Posterior vena cava (tissue), 2 donors: ENCODE measurements at regions of chr14 and their contacts with region 1.

Region 1: DNA sequence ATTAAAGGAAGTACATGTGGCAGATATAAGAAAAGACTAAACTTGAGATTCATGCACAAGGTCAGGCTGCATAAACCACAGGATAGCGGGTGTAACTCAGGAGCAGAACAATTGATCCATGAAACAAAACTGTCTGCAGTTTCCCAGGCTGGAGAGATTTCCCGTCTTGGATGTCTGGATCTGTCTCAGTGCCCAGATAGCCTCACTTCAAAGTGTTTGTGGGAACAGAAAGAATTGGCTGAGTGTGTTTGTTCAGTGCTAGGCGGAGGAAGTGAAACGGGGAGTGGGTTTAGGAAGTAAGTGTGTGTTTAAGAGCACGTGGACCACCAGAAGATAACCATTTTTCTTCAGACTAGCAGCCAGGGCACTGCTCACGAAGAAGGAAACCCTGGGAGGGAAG is 1.4 kb upstream of the RNASE10 start:
- DNase-seq: no peak

Region 2: DNA sequence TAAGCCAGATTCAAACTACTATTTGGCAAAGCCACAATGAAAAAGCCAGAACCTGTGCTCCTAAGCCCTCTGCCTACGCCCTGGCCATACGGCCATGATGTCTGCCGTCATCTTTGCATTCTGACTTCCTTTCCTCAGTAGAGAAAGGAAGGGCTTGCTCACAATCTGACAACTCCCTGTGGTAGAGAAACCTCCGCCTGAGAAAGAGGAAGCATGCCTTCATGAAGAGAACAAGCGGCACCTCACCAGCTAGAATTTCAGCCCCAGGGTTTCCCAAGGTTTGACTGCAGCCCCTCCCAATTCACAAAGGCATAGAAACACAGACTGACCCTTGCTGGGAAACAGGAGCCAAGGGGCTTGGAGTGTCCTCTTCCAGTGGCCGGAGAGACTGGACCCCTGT is 116.3 kb before region 1 on chr14:
- intact Hi-C with region 1: no loop called
- DNase-seq: no peak

Region 3: DNA sequence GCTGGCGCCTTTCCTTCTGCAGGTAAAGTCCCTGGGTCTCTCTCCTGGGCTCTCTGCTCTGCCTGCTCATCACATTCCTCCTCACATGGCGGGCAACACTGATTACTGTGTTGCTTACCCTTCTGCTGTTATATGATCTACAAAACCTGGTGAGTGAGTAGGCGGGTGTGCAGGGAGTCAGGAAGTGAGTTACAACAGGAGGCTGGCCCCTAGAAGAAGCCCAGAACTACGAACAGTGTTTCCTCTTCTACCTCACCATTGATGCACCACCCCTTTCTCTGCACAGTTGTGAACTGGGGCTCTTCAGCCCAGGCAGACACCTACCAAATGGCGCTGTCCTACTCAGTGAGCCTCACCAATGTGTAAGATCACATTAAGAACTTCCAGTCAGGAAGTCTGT is 63.0 kb before region 1 on chr14:
- intact Hi-C with region 1: no loop called
- DNase-seq: no peak

Region 4: GRCh38 chr14:20515826-20516225 is 11.9 kb after region 1 on chr14:
- intact Hi-C with region 1: loop called in 1 of 2 experiments (anchors 1 kb)
- DNase-seq: no peak